HCT116 (cell line): ENCODE measurements at regions of chr2 and their contacts with region 1.

Region 1: GRCh38 chr2:65553504-65554074 is 121.2 kb upstream of the SPRED2 start:
- DNase-seq: no peak
- ATAC-seq: peak; percentile 2; the same call in 1 of the 2 replicates
- H3K4me3 ChIP-seq: peak overlapping the region; percentile 48 to 67
- H3K27ac ChIP-seq: no peak overlapping the region
- H3K4me1 ChIP-seq: peaks cover 5 to 25% of the 10 kb centered on the region in 2 experiments; a peak in 3 of 4 replicates
- H3K27me3 ChIP-seq: no peaks in the 10 kb centered on the region
- CTCF ChIP-seq: no peak; a peak in 1 of 6 replicates
- POLR2A ChIP-seq: no peak
- RAD21 ChIP-seq: no peak

Region 2: GRCh38 chr2:65382776-65383357 is 170.7 kb before region 1 on chr2:
- CTCF ChIA-PET with region 1: no interaction called
- POLR2A ChIA-PET with region 1: no interaction called
- RAD21 ChIA-PET with region 1: no interaction called
- intact Hi-C with region 1: loop called (anchors 2 kb)
- DNase-seq: peak; percentile 96
- ATAC-seq: peak; percentile 92
- H3K4me3 ChIP-seq: peak overlapping the region in 1 of 2 experiments; percentile 38; a peak in 2 of 4 replicates
- H3K27ac ChIP-seq: peak overlapping the region; percentile 84
- H3K4me1 ChIP-seq: peaks cover 93 to 98% of the 10 kb centered on the region in 2 experiments
- H3K27me3 ChIP-seq: no peaks in the 10 kb centered on the region
- CTCF ChIP-seq: peak; percentile 27 to 50 (median 33); a peak in 3 of 6 replicates
- POLR2A ChIP-seq: no peak
- RAD21 ChIP-seq: peak; percentile 82

Region 3: GRCh38 chr2:65536596-65536995 is 17.0 kb before region 1 on chr2:
- CTCF ChIA-PET with region 1: no interaction called
- POLR2A ChIA-PET with region 1: no interaction called
- RAD21 ChIA-PET with region 1: no interaction called
- intact Hi-C with region 1: no loop called
- DNase-seq: no peak
- ATAC-seq: no peak
- H3K4me3 ChIP-seq: no peak overlapping the region
- H3K27ac ChIP-seq: no peak overlapping the region
- H3K4me1 ChIP-seq: peaks cover 16 to 23% of the 10 kb centered on the region in 2 experiments
- H3K27me3 ChIP-seq: no peaks in the 10 kb centered on the region
- CTCF ChIP-seq: no peak
- POLR2A ChIP-seq: no peak
- RAD21 ChIP-seq: no peak